CD8-positive, alpha-beta T cell (primary cell): ENCODE measurements at regions of chr18 and their contacts with region 1.

Region 1: DNA sequence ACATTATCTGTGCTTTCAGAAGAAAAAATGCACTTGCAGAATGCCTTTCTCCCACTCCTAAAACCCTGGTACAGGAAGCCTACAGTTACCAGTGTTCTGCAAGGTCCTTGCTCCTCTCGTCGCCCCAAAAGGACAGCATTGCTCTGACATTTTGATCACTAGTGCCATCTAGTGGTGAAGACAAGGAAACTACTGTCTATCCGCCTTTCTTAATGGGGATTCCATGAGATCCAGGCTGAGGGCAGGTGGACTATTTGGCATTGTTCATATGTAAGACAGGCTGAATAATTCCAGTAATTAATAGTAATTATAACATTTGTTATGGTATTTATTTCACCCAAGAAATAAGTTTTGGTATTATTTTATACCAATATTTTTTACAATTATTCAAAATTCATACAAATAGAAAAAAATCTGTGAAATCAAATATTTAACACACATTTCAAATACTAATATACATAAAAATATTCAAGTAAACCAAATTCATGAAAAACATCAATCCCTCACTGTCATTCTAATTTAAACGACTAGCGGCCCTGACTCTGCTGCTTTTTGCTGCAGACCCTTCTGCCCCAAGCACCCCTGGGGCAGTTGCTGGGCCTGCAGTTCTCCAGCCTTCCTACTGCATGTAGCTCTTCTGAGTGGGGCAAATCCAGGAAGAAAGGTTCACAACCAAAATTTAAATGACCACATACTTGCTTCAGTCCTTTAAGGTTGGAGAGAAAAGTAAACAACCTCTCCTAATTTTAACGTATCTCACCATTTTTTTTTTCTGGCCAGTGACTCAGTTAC is 19.0 kb downstream of the TPGS2 start:
- DNase-seq: peak in 8 of 9 experiments; percentile 2 to 77 (median 29)
- ATAC-seq: peak; percentile 98
- H3K4me3 ChIP-seq: no peak overlapping the region
- H3K4me3 Mint-ChIP-seq: no peak overlapping the region
- H3K27ac ChIP-seq: no peak overlapping the region
- H3K27ac Mint-ChIP-seq: no peak overlapping the region
- H3K4me1 ChIP-seq: no peaks in the 10 kb centered on the region
- H3K4me1 Mint-ChIP-seq: peaks cover 7% of the 10 kb centered on the region
- H3K27me3 ChIP-seq: no peaks in the 10 kb centered on the region
- H3K27me3 Mint-ChIP-seq: no peaks in the 10 kb centered on the region
- CTCF ChIP-seq: peak; percentile 92

Region 2: DNA sequence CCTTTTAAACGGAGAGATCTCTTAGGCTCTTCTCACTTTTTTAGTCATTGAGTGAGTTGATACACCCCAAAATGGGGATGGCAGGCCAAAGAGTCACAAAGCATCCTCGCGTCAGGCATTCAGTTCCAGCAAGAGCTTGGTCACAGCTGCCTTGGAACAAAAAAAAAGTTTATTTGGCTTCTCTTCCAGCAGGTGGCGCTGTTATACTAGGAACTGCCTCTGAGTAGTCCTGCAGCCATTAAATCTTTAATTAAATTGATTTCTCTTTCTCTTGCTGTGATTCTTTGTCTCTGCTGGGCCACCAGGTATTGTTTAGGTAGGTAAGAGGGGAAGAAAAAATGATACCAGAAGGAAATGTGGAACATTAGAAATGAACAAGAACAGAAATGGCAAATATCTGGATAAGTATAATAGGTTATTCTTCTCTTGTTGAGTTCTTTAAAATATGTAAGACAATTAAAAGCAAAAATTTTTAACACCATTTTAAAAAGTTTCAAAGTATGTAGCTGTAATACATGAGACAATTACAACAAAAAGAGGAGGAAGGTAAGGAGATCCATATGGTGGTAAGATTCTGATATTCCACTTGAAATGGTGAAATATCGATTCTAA is 1053.2 kb before region 1 on chr18:
- CTCF ChIA-PET with region 1: no interaction called
- POLR2A ChIA-PET with region 1: no interaction called
- intact Hi-C with region 1: loop called in 1 of 2 experiments (anchors 5 kb)
- DNase-seq: peak in 8 of 9 experiments; percentile 35 to 64 (median 54)
- ATAC-seq: peak; percentile 40
- H3K4me3 ChIP-seq: no peak overlapping the region
- H3K4me3 Mint-ChIP-seq: no peak overlapping the region
- H3K27ac ChIP-seq: no peak overlapping the region
- H3K27ac Mint-ChIP-seq: no peak overlapping the region
- H3K4me1 ChIP-seq: no peaks in the 10 kb centered on the region
- H3K4me1 Mint-ChIP-seq: no peaks in the 10 kb centered on the region
- H3K27me3 ChIP-seq: peaks cover 0 to 8% of the 10 kb centered on the region in 2 experiments
- H3K27me3 Mint-ChIP-seq: peaks cover 24% of the 10 kb centered on the region
- CTCF ChIP-seq: peak; percentile 84

Region 3: GRCh38 chr18:36688020-36688965 is 121.5 kb before region 1 on chr18:
- CTCF ChIA-PET with region 1: interaction called, 16 read pairs
- POLR2A ChIA-PET with region 1: no interaction called
- intact Hi-C with region 1: loop called (anchors 1 to 2 kb)
- DNase-seq: peak in 7 of 9 experiments; percentile 4 to 45 (median 26)
- ATAC-seq: no peak
- H3K4me3 ChIP-seq: no peak overlapping the region
- H3K4me3 Mint-ChIP-seq: no peak overlapping the region
- H3K27ac ChIP-seq: no peak overlapping the region
- H3K27ac Mint-ChIP-seq: no peak overlapping the region
- H3K4me1 ChIP-seq: no peaks in the 10 kb centered on the region
- H3K4me1 Mint-ChIP-seq: no peaks in the 10 kb centered on the region
- H3K27me3 ChIP-seq: no peaks in the 10 kb centered on the region
- H3K27me3 Mint-ChIP-seq: peaks cover 11% of the 10 kb centered on the region
- CTCF ChIP-seq: peak; percentile 69